Lower leg skin (tissue), 4 donors: ENCODE measurements at regions of chr14 and their contacts with region 1.

Region 1: GRCh38 chr14:75657331-75657730 is 3.3 kb downstream of the ERG28 start:
- DNase-seq: no peak
- H3K4me3 ChIP-seq: no peak overlapping the region
- CTCF ChIP-seq: no peak
- POLR2A ChIP-seq: no peak

Region 2: DNA sequence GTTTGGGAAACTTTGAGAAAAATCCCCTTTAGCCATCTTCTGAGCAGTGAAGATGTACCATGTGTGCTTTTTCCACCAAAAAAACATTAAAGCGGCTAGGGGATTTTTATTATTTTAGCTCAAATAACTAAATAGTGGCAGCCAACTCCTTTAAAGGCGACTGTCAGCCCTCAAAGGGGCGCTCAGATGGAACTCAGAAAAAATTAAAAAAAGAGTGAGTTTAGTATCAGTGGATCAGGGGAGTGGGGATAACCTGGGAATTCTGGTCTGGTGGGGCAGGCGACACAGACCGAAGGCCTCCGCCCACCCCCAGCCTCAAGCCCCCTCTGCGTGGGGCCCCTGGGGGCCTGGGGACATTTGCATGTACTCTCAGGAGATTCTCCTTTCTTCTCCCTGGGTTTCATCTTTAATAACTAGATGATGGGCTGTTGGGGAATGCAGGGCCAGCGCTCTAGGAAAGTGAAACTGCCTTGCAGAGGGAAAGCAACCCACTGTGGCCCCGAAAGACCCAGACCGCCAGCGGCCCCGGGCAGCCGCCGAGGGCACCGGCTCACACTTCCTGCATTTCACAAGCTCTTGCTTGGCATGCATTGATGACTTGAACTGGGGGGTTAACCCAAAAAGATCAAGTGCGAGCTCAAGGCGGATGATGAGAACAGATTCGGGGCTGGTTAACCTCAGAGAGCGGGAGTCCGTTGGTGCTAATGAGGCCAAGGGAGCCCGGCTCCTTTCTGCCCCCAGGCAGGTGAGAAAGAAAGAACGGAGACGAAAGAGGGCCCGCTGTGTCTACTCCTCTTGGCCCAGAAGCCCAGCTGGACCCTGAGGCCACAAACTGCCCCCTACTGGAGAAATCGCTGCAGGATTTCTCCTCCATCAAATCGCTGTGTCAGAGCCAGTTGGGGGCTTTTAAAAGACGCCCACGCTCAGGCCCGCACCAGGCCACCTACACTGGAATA is 142.4 kb before region 1 on chr14:
- intact Hi-C with region 1: no loop called
- DNase-seq: no peak
- H3K4me3 ChIP-seq: no peak overlapping the region
- CTCF ChIP-seq: no peak
- POLR2A ChIP-seq: no peak

Region 3: GRCh38 chr14:75577729-75578101 is 79.6 kb before region 1 on chr14:
- intact Hi-C with region 1: loop called (anchors 2 kb)
- DNase-seq: peak; percentile 82 to 95
- H3K4me3 ChIP-seq: peak overlapping the region; percentile 32
- CTCF ChIP-seq: no peak
- POLR2A ChIP-seq: no peak

Region 4: DNA sequence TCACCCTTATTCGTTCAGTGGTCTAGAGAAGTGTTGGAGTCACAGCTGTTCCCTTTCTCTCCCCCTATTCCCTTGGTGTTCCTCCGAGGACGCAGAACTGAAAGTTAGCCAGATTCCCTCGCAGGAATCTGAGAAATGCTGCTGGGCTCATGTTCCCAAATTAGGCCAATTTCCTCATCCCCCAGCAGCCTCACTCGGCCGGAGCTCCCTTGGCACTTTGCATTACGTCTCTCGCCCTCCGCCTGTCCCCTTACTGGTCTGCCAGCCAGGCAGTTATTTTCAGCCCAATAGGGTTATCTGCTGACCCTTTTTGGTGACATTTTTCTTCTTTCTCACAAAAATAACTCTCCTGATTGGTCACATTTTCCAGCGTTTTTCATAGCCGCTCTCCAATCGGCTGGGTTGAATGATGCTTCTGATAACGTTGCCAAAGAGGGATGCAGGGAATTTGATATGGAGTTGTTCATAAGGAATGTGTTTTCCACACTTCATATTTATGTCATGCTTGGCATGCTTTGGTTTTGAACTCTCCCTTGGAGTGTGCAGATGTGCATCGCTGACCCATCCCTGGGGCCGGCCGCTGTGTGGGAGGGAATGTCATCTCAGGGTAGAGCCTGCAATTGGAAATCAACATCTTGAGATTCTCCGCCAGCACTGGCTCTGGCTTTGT is 338.2 kb after region 1 on chr14:
- intact Hi-C with region 1: no loop called
- DNase-seq: no peak
- H3K4me3 ChIP-seq: no peak overlapping the region
- CTCF ChIP-seq: no peak
- POLR2A ChIP-seq: no peak